CD4-positive, alpha-beta T cell (primary cell): ENCODE measurements at regions of chr11 and their contacts with region 1.

Region 1: DNA sequence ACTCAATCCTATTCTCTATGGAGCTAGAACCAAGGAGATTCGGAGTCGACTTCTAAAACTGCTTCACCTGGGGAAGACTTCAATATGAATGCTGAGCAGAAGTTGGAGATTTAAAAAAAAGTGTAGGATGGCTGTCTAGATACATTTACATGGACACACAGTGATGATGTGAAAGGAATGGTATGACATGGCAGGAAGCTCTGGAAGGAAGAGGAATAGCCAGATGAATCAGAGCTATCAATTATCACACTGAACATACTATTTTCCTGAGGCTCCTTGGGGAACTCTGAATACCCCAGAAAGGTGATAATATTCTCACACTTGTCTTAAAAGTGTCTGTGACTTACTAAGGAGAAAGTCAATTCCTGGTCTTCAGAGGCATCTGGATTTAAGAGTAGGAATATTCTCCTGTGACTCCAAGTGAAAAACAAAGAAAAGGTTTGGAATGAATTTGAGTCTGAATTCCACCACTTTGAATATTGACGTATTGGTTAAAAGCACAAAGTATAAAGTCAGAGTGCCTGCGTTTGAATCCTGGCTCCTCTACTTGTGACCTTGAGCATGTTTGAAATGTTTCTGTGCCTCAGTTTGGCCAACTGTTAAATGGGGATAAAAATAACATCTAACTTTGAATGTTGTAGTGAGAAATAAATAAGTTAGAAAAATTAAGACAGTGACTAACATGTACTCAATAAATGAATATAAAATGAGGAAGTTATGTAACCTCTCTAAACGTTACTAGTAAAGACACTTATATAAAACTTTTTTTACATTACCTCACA is 1.3 kb downstream of the OR52D1 start:
- DNase-seq: no peak
- ATAC-seq: no peak
- H3K4me3 ChIP-seq: no peak overlapping the region
- H3K4me3 Mint-ChIP-seq: no peak overlapping the region
- H3K27ac ChIP-seq: no peak overlapping the region
- H3K27ac Mint-ChIP-seq: no peak overlapping the region
- H3K4me1 ChIP-seq: no peaks in the 10 kb centered on the region
- H3K4me1 Mint-ChIP-seq: no peaks in the 10 kb centered on the region
- H3K27me3 ChIP-seq: no peaks in the 10 kb centered on the region
- H3K27me3 Mint-ChIP-seq: peaks cover 10% of the 10 kb centered on the region
- CTCF ChIP-seq: no peak

Region 2: GRCh38 chr11:5507177-5507932 is 17.6 kb after region 1 on chr11:
- CTCF ChIA-PET with region 1: no interaction called
- POLR2A ChIA-PET with region 1: no interaction called
- intact Hi-C with region 1: no loop called
- DNase-seq: no peak
- ATAC-seq: no peak
- H3K4me3 ChIP-seq: no peak overlapping the region
- H3K4me3 Mint-ChIP-seq: no peak overlapping the region
- H3K27ac ChIP-seq: no peak overlapping the region
- H3K27ac Mint-ChIP-seq: no peak overlapping the region
- H3K4me1 ChIP-seq: no peaks in the 10 kb centered on the region
- H3K4me1 Mint-ChIP-seq: no peaks in the 10 kb centered on the region
- H3K27me3 ChIP-seq: peaks cover 0 to 2% of the 10 kb centered on the region in 2 experiments
- H3K27me3 Mint-ChIP-seq: no peaks in the 10 kb centered on the region
- CTCF ChIP-seq: no peak

Region 3: DNA sequence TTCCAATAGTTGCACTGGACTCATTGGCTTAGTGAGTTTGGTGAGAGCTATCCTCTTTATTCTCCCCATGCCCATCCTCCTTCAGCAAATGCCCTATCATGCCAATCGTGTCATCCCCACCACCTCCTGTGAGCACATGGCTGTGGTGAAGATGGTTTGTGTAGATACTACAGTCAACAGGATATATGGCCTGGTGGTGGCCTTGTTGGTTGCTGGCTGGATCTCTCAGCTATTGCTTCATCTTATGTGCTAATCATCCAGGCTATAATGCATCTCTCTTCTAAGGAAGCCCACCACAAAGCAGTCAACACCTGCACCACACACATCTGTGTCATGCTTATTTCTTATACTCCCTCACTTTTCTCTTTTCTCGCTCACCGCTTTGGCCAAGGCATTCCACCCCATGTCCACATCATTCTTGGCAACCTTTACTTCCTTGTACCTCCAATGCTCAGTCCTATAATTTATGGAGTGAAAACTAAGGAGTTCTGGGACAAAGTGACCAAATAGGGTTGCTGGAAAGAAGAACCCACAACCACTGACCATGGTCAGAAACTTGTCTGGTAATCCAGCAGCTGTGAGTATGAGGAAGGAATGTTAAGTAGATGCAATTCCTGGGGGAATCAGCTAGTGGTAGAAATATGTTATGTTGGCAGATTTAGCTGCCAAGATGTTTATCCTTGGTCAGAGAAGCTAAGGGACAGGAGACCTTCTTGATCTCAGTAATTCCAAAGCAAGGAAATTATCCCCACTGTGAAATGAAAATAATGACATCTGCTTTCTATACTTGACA is 230.1 kb after region 1 on chr11:
- CTCF ChIA-PET with region 1: no interaction called
- POLR2A ChIA-PET with region 1: no interaction called
- intact Hi-C with region 1: loop called in 1 of 2 experiments (anchors 10 kb)
- DNase-seq: no peak
- ATAC-seq: no peak
- H3K4me3 ChIP-seq: no peak overlapping the region
- H3K4me3 Mint-ChIP-seq: no peak overlapping the region
- H3K27ac ChIP-seq: no peak overlapping the region
- H3K27ac Mint-ChIP-seq: no peak overlapping the region
- H3K4me1 ChIP-seq: no peaks in the 10 kb centered on the region
- H3K4me1 Mint-ChIP-seq: no peaks in the 10 kb centered on the region
- H3K27me3 ChIP-seq: no peaks in the 10 kb centered on the region
- H3K27me3 Mint-ChIP-seq: no peaks in the 10 kb centered on the region
- CTCF ChIP-seq: no peak